ENCODE measurements at regions of chr7 and their contacts with region 1.

Region 1: DNA sequence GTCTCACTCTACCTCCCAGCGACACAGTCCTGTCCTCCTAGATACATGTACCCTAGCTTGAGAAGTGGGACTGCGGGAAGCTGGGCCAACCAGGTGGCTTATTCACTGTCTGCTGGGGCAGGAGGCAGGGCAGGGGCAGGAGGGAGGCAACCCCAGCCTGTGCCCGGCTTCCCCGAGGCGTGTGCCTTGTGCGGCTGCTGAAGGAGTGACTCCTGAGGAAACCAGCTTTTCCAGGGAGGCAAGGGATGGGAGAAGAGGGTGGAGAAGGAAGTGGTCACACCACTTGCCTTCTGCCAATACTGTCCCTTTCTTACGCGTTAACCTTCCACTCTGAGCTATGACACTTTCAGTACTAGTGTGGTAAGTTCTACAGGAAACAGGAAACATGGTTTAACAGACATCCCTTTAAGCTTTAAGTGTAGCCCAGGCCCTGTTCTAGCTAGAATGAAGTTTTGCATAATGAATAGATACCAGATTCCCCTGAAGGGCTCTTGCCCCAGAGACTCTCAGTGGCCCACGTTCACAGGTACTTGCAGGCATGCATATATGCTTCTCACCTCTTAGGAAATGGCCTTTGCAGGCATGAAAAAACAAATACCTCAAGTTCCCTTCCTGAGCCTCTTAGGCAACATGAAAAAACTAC is 40.6 kb downstream of the SYPL1 start:
- DNase-seq: peak; percentile 64
- H3K4me3 Mint-ChIP-seq: no peak overlapping the region
- H3K27ac Mint-ChIP-seq: peak overlapping the region; percentile 45
- H3K4me1 Mint-ChIP-seq: peaks cover 42% of the 10 kb centered on the region
- H3K27me3 Mint-ChIP-seq: no peaks in the 10 kb centered on the region
- CTCF ChIP-seq: no peak

Region 2: GRCh38 chr7:105906695-105907094 is 164.8 kb before region 1 on chr7:
- CTCF ChIA-PET with region 1: no interaction called
- intact Hi-C with region 1: no loop called
- DNase-seq: no peak
- H3K4me3 Mint-ChIP-seq: no peak overlapping the region
- H3K27ac Mint-ChIP-seq: no peak overlapping the region
- H3K4me1 Mint-ChIP-seq: no peaks in the 10 kb centered on the region
- H3K27me3 Mint-ChIP-seq: no peaks in the 10 kb centered on the region
- CTCF ChIP-seq: no peak

Region 3: GRCh38 chr7:106112117-106112971 is 40.9 kb after region 1 on chr7 and contains the start of gene SYPL1:
- CTCF ChIA-PET with region 1: interaction called, 9 read pairs
- intact Hi-C with region 1: loop called (anchors 5 kb)
- DNase-seq: peak; percentile 96
- H3K4me3 Mint-ChIP-seq: peak within 1 kb of the TSS; percentile 90
- H3K27ac Mint-ChIP-seq: peak within 1 kb of the TSS; percentile 79
- H3K4me1 Mint-ChIP-seq: peaks cover 23% of the 10 kb centered on the region
- H3K27me3 Mint-ChIP-seq: no peaks in the 10 kb centered on the region
- CTCF ChIP-seq: no peak
- total RNA-seq, gene SYPL1: 76.1 and 88.3 TPM in 2 replicates